Esophagus squamous epithelium (tissue), 5 donors: ENCODE measurements at regions of chr17 and their contacts with region 1.

Region 1: DNA sequence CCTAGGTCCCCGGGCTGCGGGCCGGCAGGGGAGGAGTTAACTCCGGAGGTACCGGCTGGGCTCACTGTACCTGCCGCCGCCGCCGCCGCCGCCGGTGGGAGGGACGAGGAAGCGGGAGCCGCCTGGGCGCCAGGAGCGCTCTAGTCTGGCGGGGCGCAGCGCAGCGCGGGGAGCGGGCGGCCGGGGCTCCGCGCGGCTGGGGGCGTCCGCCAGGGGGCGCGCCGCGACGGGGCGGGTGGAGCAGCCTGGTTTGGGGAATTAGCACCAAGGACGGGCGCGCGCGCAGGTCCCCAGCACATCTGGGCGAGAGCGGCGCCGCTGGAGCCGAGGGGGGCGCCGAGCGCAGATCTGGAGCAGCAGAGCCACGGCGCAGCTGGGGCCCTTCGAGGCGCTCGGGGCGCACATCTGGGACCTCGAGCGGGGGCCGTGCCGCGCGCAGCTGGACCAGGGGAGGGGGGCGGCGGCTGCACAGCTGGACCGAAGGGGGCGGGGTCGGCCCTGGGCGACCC is at the start of gene NXPH3:
- DNase-seq: no peak
- H3K4me3 ChIP-seq: peak within 1 kb of the TSS; percentile 45 to 78 (median 60)
- H3K27ac ChIP-seq: peak within 1 kb of the TSS; percentile 64 to 90 (median 80)
- H3K4me1 ChIP-seq: peaks cover 25 to 59% (median 28%) of the 10 kb centered on the region in 3 donors
- H3K27me3 ChIP-seq: peaks cover 0 to 46% (median 0%) of the 10 kb centered on the region in 4 donors
- CTCF ChIP-seq: peak in 4 of 6 experiments; percentile 79 to 89 (median 86)
- POLR2A ChIP-seq: peak in 1 of 4 donors; percentile 21
- total RNA-seq, gene NXPH3: 0.53 to 3.8 (median 1.5) TPM

Region 2: DNA sequence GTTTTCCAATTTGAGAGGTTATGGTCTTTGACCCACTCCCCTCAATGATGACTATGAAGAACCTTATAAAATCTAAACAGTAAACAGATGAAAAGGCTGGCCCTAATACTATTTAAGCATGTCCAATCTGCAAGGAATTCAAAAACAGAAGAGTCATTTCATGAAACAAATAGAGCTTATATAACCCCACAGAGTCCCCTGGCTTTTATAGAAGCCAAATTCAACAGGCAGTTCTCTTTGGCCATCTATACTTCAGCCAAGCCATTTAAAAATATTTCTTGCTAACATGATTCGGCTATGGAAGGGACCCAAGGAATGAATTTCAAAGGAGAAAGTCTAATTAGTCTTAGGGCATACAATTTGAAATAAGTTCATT is 58.8 kb after region 1 on chr17:
- intact Hi-C with region 1: no loop called
- DNase-seq: no peak
- H3K4me3 ChIP-seq: no peak overlapping the region
- H3K27ac ChIP-seq: peak overlapping the region in 3 of 4 donors; percentile 51 to 61 (median 57)
- H3K4me1 ChIP-seq: peaks cover 0 to 89% (median 5%) of the 10 kb centered on the region in 3 donors
- H3K27me3 ChIP-seq: no peaks in the 10 kb centered on the region
- CTCF ChIP-seq: no peak
- POLR2A ChIP-seq: no peak

Region 3: DNA sequence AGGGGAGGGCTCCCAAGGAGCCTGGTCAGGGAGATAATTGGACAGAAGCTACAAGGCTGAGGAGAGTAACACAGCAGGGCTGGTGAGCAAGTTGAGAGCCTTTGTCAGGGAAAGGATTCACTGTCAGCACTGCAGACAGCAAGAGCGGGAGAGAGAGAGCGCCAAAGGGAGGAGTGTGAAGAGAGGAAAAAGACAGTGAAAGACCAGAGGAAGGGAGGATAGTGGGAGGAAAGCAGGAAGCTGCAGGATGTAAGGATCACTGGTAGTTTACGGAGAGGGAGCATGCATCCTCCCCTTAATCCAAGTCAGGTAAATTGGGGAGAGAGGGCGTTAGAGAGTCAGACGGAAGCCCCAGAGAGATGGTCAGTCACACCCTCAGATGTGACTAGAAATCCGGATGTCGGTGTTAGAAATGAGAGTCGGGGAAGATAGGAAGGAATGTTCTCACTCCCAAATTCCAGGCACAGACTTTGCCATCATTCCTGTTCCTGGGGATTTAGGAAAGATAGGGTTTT is 116.1 kb after region 1 on chr17:
- intact Hi-C with region 1: loop called (anchors 2 kb)
- DNase-seq: no peak
- H3K4me3 ChIP-seq: peak overlapping the region in 1 of 4 donors; percentile 5
- H3K27ac ChIP-seq: peak overlapping the region; percentile 63 to 85 (median 82)
- H3K4me1 ChIP-seq: peaks cover 5 to 43% (median 21%) of the 10 kb centered on the region in 3 donors
- H3K27me3 ChIP-seq: no peaks in the 10 kb centered on the region
- CTCF ChIP-seq: no peak
- POLR2A ChIP-seq: no peak

Region 4: DNA sequence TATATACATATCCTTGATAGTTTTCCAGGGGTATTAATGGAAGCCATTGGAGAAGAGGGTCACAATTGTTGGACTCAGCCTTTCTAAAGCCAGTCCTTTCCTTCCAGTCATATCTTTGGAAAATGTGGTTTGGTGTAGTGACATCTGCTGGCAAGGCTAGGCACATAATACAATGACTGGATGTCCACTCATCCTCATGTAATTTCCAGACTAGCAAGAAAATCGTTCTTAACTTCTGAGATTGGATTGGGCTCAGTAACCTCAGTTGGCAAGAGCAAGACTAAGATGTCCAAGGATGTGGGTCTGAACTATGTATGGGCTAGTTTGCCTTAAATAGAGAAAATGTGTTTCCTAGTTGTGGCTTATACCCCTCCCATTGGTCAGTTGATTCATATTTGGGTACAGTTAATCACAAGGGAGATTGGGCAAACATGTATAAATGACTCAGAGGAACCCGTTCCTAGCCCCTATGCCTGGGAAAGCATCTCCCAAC is 204.2 kb after region 1 on chr17:
- intact Hi-C with region 1: loop called (anchors 10 kb)
- DNase-seq: no peak
- H3K4me3 ChIP-seq: no peak overlapping the region
- H3K27ac ChIP-seq: peak overlapping the region in 3 of 4 donors; percentile 46 to 80 (median 59)
- H3K4me1 ChIP-seq: peaks cover 0 to 63% (median 39%) of the 10 kb centered on the region in 3 donors
- H3K27me3 ChIP-seq: no peaks in the 10 kb centered on the region
- CTCF ChIP-seq: peak; percentile 22 to 64 (median 47)
- POLR2A ChIP-seq: no peak

Region 5: GRCh38 chr17:49851387-49852291 is 276.0 kb after region 1 on chr17:
- intact Hi-C with region 1: loop called (anchors 5 kb)
- DNase-seq: no peak
- H3K4me3 ChIP-seq: peak overlapping the region; percentile 41 to 79 (median 60)
- H3K27ac ChIP-seq: peak overlapping the region; percentile 39 to 73 (median 54)
- H3K4me1 ChIP-seq: peaks cover 8 to 28% (median 10%) of the 10 kb centered on the region in 3 donors
- H3K27me3 ChIP-seq: peaks cover 0 to 5% (median 0%) of the 10 kb centered on the region in 4 donors
- CTCF ChIP-seq: peak; percentile 26 to 70 (median 64)
- POLR2A ChIP-seq: no peak